Cardiac septum (tissue), 1 donor: ENCODE measurements at regions of chr5 and their contacts with region 1.

Region 1: GRCh38 chr5:14270209-14270702 is 127.1 kb downstream of the TRIO start:
- DNase-seq: no peak

Region 2: DNA sequence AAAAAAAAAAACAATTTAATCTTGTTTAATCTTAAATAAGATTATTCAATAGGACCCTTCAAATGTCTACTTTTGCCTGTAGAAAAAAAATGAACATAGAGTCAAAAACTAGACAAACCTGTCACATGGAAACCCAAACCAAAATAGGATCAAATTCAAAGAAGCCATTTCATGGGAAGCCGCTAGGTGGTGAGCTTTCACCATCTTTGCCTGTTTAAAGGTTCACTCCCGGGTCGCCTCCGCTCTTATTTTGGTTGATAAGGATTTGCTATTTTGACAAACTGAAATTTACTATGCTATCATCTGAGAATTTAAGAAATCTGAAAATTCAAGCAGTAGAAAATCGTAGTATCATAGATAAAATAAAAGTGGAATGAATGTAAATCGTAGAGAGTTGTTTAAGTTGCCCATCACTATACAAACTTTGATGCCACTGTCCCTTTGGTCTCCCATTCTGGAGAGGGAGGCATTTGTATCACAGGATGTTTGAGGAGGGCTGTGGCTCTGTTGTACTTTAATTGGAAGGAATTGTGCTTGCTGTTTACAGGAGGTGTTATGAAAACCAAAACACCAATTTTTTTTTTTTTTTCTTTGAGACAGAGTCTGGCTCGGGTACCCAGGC is 282.3 kb before region 1 on chr5:
- intact Hi-C with region 1: loop called (anchors 5 kb)
- DNase-seq: no peak

Region 3: DNA sequence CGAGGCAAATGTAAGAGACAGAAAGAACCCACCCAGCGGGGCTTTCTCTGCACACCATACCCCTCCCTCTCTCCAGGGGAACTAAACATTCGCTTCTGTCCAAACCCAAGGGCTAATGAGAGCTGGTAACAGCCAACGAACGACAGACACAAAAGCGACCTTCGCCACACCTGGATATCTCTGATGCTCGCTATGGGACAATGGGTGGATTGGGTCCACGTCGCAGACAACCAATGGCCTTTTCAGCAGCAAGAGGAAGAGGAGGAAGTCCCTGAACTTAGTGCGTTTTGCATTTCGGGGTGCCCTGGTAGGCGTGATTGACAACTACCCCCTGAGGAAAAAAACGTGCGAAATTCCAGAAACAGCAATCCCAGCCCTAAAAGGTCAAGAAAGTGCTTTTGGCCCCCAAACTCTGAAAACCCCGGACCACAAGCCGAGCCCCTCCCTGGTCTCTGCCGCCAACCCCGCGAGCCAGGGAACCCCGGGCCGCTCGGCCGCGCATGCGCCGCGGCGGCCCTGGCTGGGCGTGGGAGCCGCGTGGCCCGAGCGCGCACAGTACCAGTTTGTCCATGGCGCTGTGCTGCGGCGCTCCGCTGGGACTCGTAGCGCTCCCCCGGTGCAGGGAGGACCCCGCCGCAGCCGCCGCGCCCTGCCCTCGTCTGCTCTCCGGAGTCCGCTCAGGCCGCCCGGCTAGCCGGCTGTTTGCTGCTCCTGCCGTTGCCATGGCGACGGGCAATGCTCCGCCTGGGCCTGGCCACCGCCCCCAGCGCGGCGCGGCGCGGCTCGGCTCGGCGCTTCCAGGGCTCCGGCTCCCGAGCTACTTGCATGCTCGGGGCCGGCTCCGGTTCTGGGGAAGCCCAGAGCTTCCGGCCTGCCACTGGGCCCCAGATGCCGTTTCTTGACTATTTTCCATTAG is 258.9 kb before region 1 on chr5:
- intact Hi-C with region 1: loop called (anchors 2 kb)
- DNase-seq: peak; percentile 87

Region 4: GRCh38 chr5:14108170-14108996 is 161.9 kb before region 1 on chr5:
- intact Hi-C with region 1: loop called (anchors 2 kb)
- DNase-seq: no peak

Region 5: DNA sequence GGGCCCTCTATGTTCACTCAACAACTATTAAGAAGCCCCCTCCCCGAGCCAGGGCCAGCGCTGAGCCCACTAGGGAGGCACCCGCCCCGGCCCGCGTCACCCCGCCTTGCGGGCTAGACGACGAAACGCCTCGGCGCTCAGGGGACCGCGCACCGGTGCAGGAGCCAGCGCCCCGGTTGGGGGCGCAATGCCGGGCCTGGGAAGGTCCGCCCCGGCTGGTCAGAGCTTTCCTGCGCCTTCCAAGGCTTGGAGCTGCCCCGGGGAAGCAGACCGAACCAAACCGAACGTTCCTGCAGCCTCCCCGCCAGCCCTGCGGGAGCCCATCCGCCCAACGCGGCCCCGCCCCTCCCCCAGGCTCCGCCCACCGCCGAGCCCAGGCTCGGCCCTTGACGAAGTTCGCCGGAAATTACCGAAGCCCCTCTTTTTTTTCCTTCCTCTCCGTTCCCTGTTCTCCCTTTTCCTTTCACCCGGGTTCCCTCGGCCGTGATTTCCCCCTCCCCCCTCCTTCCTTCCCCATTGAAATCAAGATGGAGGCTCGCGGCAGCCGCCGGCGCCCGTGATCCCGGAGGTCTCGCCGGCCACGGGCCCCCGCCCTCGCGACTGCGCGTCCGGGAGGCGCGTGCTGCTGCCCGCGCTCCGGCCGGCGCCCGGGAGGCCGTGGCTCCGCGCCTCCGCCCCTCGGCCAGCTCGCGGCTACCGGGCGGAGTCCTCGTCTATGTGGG is 127.3 kb before region 1 on chr5 and contains the start of gene TRIO:
- intact Hi-C with region 1: loop called (anchors 2 kb)
- DNase-seq: peak; percentile 96
- total RNA-seq, gene TRIO: 89.8 TPM

Region 6: GRCh38 chr5:14306329-14306815 is 36.1 kb after region 1 on chr5:
- intact Hi-C with region 1: no loop called
- DNase-seq: no peak